ENCODE measurements at regions of chr2 and their contacts with region 1.

Region 1: DNA sequence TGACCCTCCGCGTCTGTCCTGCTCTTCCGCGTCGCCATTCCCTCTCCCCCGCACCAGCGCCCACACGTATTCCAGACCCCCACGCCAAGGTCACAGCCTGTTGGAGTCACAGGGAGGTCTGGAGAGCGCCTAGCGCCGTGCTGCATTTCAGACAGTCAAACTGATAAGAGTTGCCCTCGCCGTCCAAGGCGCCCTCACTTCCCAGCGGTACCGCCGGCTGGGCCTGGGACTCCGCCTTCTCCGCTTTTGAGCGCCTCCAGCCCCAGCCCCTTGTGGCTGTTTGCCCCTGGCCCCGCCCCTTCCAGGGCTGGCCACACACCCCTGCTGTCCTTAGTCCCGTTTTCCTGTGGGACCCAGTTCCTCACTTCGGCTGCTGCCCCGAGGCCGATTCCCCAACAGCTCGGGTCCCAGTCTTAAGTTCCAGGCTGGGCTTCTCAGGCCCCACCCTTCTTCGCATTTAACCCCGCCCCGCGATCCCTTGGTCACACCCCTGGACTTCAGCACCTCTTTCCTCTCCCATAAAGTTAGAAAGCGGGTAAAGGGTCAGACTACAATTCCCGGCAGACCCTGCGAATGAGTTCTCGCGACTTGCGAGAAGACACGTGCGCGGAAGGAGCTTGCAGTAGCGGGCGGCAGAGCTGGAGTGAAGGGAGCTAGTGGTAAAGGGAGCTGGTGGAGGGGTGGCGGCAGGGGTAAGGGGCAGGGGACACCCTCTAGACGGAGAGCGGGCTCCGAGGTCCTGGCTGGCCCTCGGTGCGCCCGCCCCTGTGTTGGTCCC is at the start of gene GMPPA:
- H3K4me3 ChIP-seq: peak within 1 kb of the TSS; percentile 69
- H3K27ac ChIP-seq: peak within 1 kb of the TSS; percentile 33; the same call in 1 of the 2 replicates
- H3K4me1 ChIP-seq: peaks cover 8% of the 10 kb centered on the region; the same call in 1 of the 2 replicates
- CTCF ChIP-seq: peak; percentile 28; the same call in 1 of the 2 replicates

Region 2: DNA sequence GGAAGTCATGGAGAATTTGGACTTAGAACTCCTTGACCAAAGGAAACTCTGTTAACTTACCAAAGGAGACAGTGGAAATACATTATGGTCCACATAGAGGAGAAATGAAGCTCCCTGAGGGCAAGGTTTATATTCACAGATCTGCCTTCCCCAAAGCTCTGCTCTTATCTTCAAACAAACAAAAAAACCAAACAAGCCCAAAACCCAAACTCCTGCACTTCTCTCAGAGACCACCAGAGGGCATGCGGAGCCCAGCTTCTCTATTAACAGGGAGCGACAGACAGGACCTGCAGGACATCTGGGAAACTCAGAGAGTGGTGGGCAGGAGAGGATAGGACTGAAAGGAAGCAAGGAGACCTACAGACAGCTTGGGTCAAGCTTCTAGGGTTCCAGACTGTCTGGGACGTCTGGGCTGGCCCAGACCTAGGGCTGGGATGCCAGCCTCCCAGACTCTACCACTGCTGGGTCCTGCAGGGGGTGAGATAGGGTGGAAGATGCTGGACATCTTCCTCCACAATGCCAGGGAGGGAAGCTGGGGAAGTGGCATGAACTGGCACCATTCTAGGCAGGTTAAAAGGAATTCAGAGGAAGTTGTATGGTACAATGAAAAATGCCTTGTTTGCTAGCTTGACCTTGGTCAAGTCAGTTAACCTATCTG is 621.8 kb before region 1 on chr2:
- CTCF ChIA-PET with region 1: no interaction called
- POLR2A ChIA-PET with region 1: no interaction called
- H3K4me3 ChIP-seq: no peak overlapping the region
- H3K27ac ChIP-seq: no peak overlapping the region
- H3K4me1 ChIP-seq: no peaks in the 10 kb centered on the region
- CTCF ChIP-seq: peak; percentile 84

Region 3: GRCh38 chr2:219459460-219460311 is 38.8 kb before region 1 on chr2:
- CTCF ChIA-PET with region 1: interaction called, 21 read pairs
- POLR2A ChIA-PET with region 1: interaction called, 6 read pairs
- H3K4me3 ChIP-seq: no peak overlapping the region
- H3K27ac ChIP-seq: no peak overlapping the region
- H3K4me1 ChIP-seq: peaks cover 2% of the 10 kb centered on the region; the same call in 1 of the 2 replicates
- CTCF ChIP-seq: peak; percentile 77

Region 4: DNA sequence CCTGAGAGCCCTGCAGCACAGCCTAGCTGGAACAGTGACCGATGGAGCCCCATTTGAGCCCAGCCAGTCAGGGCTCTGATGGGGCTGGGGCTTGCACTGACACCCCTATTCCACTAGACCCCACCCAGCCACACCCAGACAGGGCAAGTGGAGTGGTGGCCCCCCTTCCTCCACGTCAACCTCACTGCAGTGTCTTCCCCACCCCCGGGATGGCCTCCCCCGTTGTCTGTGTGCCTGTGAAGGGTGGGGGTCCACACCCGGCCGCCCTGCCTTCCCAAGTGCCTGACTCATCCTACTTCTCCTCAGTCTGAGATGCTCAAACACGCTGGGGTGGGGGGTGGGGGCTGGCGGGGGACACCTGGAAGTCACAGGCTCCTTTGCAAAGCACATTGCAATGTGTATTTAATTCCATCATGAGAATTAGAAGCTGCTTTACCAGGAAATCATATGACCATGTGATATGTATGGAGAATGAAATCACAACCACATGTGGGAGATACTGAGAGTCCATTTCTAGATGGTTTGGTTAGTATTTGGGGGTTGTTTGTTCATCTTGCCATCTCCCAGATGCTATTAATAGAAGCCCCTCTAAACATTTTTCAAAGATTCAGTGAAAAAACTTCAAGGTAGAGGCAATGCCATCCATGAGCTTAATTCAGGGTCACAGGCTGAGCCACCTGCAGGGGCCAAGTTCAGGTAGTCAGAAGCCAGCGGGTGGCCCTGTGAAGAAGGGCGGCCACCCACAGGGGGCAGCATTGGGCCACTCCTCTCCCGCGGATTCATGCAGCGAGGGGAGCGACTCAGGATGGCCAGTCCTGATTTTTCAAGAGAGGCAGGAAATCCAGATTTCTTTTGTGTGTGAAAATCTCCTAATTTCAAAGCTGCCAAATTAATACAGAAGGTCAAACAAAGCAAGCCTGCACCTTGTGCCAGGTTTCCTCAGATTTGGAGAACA is 22.5 kb before region 1 on chr2:
- CTCF ChIA-PET with region 1: interaction called, 97 read pairs
- POLR2A ChIA-PET with region 1: interaction called, 3 read pairs
- H3K4me3 ChIP-seq: no peak overlapping the region
- H3K27ac ChIP-seq: no peak overlapping the region
- H3K4me1 ChIP-seq: 0 out of 2 replicates have a peak, but pooled peaks cover 2% of the 10 kb centered on the region
- CTCF ChIP-seq: peak; percentile 83

Region 5: DNA sequence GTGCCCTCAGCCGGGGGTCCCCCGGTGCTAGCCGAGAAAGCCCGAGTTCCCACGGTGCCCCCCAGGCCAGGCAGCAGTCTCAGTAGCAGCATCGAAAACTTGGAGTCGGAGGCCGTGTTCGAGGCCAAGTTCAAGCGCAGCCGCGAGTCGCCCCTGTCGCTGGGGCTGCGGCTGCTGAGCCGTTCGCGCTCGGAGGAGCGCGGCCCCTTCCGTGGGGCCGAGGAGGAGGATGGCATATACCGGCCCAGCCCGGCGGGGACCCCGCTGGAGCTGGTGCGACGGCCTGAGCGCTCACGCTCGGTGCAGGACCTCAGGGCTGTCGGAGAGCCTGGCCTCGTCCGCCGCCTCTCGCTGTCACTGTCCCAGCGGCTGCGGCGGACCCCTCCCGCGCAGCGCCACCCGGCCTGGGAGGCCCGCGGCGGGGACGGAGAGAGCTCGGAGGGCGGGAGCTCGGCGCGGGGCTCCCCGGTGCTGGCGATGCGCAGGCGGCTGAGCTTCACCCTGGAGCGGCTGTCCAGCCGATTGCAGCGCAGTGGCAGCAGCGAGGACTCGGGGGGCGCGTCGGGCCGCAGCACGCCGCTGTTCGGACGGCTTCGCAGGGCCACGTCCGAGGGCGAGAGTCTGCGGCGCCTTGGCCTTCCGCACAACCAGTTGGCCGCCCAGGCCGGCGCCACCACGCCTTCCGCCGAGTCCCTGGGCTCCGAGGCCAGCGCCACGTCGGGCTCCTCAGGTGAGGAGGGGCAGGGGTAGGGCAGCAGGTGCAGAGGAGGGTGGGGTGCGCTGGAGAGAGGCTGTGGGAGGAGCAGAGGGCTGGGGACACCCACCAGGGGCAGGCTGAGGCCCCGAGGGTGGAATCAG is 13.9 kb before region 1 on chr2:
- CTCF ChIA-PET with region 1: interaction called, 97 read pairs
- POLR2A ChIA-PET with region 1: interaction called, 7 read pairs
- H3K4me3 ChIP-seq: no peak overlapping the region
- H3K27ac ChIP-seq: no peak overlapping the region
- H3K4me1 ChIP-seq: no peaks in the 10 kb centered on the region
- CTCF ChIP-seq: no peak

Region 6: DNA sequence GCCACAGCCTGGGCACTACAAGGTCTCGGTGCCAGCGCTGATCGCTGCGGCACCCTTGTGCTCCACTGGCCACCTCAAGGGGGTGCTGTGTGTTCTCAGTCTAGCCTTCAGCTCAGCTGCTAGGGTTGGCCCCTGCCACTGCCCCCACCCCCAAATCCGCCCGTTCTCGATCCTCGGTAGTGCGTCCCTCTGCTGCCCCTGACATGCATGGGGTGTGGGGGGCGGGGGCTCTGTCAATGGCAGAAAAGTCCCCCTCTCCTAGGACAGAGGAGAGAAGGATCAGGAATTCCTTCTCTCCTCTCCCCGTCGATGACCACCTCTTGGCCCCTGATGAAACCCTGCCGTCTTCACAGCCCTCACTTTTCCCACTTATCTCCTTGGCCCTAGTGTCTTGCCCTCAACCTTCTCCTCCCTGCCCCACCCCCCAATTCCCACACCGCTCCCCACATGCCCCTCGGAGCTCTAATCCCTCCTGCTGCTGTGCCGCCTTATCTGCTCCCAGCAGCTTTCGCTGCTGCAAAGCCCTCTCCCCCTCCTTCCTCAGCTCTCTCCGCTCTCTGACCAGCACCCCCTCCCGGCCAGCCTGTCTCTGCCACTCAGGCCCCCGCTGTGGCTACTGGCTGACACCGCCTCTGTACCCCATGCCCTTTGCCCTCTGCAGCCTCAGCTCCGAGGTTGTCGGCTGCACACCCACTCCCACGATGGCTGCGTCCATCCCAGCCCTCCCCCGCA is 11.5 kb after region 1 on chr2:
- CTCF ChIA-PET with region 1: interaction called, 150 read pairs
- POLR2A ChIA-PET with region 1: interaction called, 21 read pairs
- H3K4me3 ChIP-seq: peak overlapping the region; percentile 25
- H3K27ac ChIP-seq: no peak overlapping the region
- H3K4me1 ChIP-seq: peaks cover 2% of the 10 kb centered on the region
- CTCF ChIP-seq: peak; percentile 87

Region 7: GRCh38 chr2:219521066-219521880 is 22.8 kb after region 1 on chr2:
- CTCF ChIA-PET with region 1: interaction called, 252 read pairs
- POLR2A ChIA-PET with region 1: interaction called, 4 read pairs
- H3K4me3 ChIP-seq: no peak overlapping the region
- H3K27ac ChIP-seq: no peak overlapping the region
- H3K4me1 ChIP-seq: peaks cover 7% of the 10 kb centered on the region
- CTCF ChIP-seq: peak; percentile 85

Measured in HEK293 (cell line).